Activated CD4-positive, alpha-beta T cell treated with anti-CD3 and anti-CD28 coated beads for 36 hours (primary cell): ENCODE measurements at regions of chr14 and their contacts with region 1.

Region 1: GRCh38 chr14:21081521-21082142 is 11.5 kb downstream of the ARHGEF40 start:
- DNase-seq: no peak
- ATAC-seq: no peak
- H3K4me3 Mint-ChIP-seq: no peak overlapping the region
- H3K27ac Mint-ChIP-seq: no peak overlapping the region
- H3K4me1 Mint-ChIP-seq: peaks cover 6% of the 10 kb centered on the region
- H3K27me3 Mint-ChIP-seq: no peaks in the 10 kb centered on the region

Region 2: DNA sequence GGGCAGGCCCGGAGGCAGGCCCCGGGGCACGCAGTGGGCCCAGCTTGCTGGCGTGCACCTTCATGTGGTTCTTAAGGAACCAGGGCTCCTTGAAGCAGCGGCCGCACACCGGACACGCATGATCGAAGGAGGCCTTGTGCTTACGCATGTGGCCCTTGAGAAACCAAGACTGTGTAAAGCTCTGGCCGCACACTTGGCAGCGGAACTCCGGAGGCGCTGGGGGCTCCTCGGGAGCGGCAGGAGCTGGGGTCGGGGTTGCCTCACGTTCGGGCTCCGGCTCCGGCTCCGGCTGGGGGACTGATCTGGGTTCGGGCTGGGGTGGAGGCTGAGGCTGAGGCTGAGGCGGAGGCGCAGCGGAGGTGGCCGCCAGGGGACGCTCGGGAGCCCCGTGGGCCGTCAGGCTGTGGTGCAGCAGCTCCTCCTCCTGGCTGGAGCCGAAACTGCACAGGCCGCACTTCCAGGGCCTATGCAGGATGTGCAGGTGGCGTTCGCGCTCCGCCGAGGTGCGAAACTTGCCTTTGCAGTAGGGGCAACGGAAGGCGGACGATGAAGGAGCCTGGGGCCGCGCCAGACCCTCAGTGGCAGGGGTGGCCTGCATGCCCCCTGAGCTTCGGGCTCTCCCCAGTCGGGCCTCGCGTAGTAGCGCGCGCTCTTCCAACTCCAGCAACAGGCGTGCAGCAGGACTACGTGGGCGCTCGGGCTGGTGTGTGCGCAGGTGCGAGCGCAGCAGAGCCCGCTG is 10.8 kb after region 1 on chr14:
- CTCF ChIA-PET with region 1: interaction called, 13 read pairs
- POLR2A ChIA-PET with region 1: no interaction called
- intact Hi-C with region 1: no loop called
- DNase-seq: peak; percentile 95
- ATAC-seq: peak; percentile 91
- H3K4me3 Mint-ChIP-seq: no peak overlapping the region
- H3K27ac Mint-ChIP-seq: no peak overlapping the region
- H3K4me1 Mint-ChIP-seq: peaks cover 17% of the 10 kb centered on the region
- H3K27me3 Mint-ChIP-seq: no peaks in the 10 kb centered on the region

Region 3: GRCh38 chr14:21498553-21499526 is 417.2 kb after region 1 on chr14:
- CTCF ChIA-PET with region 1: no interaction called
- POLR2A ChIA-PET with region 1: no interaction called
- intact Hi-C with region 1: no loop called
- DNase-seq: peak; percentile 22
- ATAC-seq: peak; percentile 78
- H3K4me3 Mint-ChIP-seq: no peak overlapping the region
- H3K27ac Mint-ChIP-seq: peak overlapping the region; percentile 64
- H3K4me1 Mint-ChIP-seq: peaks cover 23% of the 10 kb centered on the region
- H3K27me3 Mint-ChIP-seq: no peaks in the 10 kb centered on the region